B cell (primary cell): ENCODE measurements at regions of chr19 and their contacts with region 1.

Region 1: DNA sequence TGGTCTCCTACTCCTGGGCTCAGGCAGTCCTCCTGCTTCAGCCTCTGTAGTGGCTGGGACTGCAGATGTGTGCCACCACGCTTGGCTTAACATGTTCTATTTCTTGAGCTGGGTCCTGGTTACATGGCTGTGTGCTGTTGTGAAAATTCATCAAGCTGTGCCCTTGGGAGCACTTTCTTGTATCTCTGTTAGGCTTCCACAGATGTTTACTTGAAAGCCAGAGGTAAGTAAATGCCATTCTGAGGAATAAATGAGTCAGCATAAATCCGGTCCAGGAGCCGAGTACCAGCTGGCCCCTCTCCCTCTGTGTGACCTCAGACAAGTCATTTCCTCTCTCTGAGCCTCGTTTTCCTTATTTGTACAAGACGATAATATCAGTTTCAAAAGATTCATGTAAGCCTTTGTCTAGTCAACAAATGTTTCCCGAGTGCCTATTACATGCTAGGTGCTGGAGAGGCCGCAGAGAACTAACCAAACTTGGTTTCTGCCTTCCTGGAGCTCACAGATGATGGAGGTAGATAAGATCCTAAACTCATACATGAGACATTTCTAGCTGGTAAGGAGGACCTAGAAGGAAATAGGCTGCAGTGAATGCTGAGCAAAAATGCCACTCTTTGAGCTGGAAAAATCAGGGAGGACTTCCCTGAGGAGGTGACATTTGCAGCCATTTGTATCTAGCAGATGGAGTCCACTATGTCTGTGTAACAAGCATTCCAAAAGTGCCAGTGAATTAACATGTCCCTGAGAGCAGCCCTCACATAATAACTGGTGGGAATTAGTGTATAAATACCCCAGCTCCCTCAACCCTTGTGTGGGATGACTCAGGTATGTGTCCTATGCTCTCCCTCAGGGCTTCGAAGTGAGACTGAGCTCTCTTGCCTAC is 2.7 kb upstream of the RASAL3 start:
- DNase-seq: no peak
- ATAC-seq: no peak
- H3K4me3 ChIP-seq: no peak overlapping the region
- H3K4me3 Mint-ChIP-seq: peak overlapping the region; percentile 47
- H3K27ac ChIP-seq: no peak overlapping the region
- H3K27ac Mint-ChIP-seq: peak overlapping the region; percentile 68
- H3K4me1 ChIP-seq: peaks cover 41 to 53% of the 10 kb centered on the region in 2 donors
- H3K4me1 Mint-ChIP-seq: peaks cover 48% of the 10 kb centered on the region
- H3K27me3 ChIP-seq: peaks cover 0 to 24% (median 8%) of the 10 kb centered on the region in 4 experiments
- H3K27me3 Mint-ChIP-seq: peaks cover 19% of the 10 kb centered on the region
- CTCF ChIP-seq: no peak

Region 2: GRCh38 chr19:14318873-14319272 is 1148.2 kb before region 1 on chr19:
- CTCF ChIA-PET with region 1: no interaction called
- POLR2A ChIA-PET with region 1: no interaction called
- intact Hi-C with region 1: no loop called
- DNase-seq: no peak
- ATAC-seq: no peak
- H3K4me3 ChIP-seq: no peak overlapping the region
- H3K4me3 Mint-ChIP-seq: no peak overlapping the region
- H3K27ac ChIP-seq: no peak overlapping the region
- H3K27ac Mint-ChIP-seq: no peak overlapping the region
- H3K4me1 ChIP-seq: no peaks in the 10 kb centered on the region
- H3K4me1 Mint-ChIP-seq: no peaks in the 10 kb centered on the region
- H3K27me3 ChIP-seq: no peaks in the 10 kb centered on the region
- H3K27me3 Mint-ChIP-seq: no peaks in the 10 kb centered on the region
- CTCF ChIP-seq: no peak

Region 3: DNA sequence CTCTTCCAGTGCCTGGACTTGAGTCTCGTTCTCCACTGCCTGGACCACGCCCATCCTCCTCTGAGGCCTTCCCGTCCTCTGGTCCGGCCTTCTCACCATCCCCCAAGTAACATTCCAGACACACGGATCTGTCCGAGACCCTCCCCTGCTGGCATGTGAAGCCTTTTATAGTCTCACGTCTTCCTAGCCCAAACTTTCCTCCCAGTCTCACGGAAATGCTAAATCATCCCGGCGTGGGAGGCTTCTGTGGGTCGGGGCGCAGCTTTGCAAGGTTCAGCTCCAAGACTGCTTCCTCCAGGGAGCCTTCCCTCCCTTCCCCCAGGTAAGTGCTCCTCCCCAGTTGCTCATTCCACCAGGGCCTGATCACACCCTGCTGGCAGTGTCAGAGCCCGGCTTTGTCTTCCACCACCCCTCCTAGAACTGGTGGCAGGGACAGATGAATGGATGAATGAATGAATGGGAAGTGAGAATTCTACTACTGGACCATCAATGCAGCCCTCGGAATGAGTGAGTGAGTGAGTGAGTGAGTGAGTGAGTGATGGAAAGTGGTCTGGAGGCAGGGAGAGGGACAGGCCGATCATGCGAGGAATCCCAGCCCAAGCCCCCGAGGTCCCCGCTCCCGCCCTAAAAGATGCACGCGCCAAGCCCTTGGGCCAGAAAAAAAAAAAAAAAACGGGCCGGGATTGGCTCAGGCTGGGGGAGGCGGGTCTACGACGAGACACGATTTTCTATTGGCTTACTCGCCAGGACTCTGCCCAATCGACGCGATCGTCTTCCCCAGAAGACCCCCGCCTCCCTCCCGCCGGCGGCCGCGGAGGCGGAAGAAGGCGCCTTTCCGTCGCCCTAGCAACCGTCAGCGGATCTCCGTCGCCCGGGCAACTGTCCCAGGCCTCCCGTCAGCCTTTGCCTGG is 244.1 kb before region 1 on chr19:
- CTCF ChIA-PET with region 1: no interaction called
- POLR2A ChIA-PET with region 1: no interaction called
- intact Hi-C with region 1: no loop called
- DNase-seq: peak; percentile 89
- ATAC-seq: peak; percentile 99
- H3K4me3 ChIP-seq: peak overlapping the region; percentile 30 to 70 (median 57)
- H3K4me3 Mint-ChIP-seq: peak overlapping the region; percentile 91
- H3K27ac ChIP-seq: no peak overlapping the region
- H3K27ac Mint-ChIP-seq: peak overlapping the region; percentile 53
- H3K4me1 ChIP-seq: peaks cover 16 to 17% of the 10 kb centered on the region in 2 donors
- H3K4me1 Mint-ChIP-seq: peaks cover 18% of the 10 kb centered on the region
- H3K27me3 ChIP-seq: peaks cover 0 to 19% (median 5%) of the 10 kb centered on the region in 4 experiments
- H3K27me3 Mint-ChIP-seq: peaks cover 18% of the 10 kb centered on the region
- CTCF ChIP-seq: no peak

Region 4: DNA sequence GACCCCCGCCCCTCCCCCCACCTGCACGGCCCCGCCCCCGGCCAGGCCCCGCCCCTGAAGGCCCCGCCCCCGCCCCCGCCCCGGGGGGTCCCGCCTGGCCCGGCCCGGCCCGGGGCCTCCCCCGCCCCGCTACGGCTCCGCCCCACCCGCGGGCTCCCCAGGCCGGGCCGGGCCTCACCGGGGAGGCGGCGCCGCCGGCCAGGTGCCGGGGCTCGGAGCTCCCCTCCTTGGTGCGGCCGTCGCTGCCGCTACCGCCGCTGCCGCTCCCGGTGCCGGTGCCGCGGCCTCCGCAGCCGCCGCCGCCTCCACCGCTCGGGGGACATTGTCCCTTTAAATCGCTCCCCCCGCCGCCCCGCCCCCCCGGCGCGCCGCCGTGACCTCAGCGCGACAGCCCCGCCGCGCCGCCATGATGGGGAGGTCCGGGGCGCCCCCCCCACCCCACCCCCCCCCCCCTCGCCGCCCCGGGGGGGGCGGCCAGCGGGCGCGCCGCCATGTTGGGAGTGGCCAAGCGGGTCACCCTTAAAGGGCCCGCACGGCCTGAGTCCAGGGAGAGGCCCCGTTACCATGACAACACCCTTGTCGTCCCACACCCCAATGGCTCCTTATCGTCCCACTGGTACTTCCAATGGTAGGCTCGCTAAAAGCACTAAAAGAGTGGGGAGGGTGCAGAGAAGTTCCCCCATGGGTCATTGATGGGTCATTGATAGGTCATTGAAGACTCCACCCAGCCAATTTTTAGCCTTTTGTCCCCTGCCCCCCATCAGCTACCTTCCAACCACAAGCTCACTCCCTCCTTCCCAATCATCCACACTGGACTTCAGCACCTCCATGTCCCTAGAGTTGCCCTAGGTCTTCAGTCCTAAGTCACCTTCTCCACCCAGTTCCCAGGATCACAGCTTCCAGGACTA is 17.2 kb before region 1 on chr19 and contains the start of gene WIZ:
- CTCF ChIA-PET with region 1: interaction called, 7 read pairs
- POLR2A ChIA-PET with region 1: no interaction called
- intact Hi-C with region 1: loop called (anchors 2 kb)
- DNase-seq: peak; percentile 91
- ATAC-seq: peak; percentile 78
- H3K4me3 ChIP-seq: peak within 1 kb of the TSS in 4 of 5 experiments; percentile 51 to 69 (median 58)
- H3K4me3 Mint-ChIP-seq: peak within 1 kb of the TSS; percentile 85
- H3K27ac ChIP-seq: peak within 1 kb of the TSS; percentile 73 to 81
- H3K27ac Mint-ChIP-seq: peak within 1 kb of the TSS; percentile 92
- H3K4me1 ChIP-seq: peaks cover 8 to 17% of the 10 kb centered on the region in 2 donors
- H3K4me1 Mint-ChIP-seq: peaks cover 12% of the 10 kb centered on the region
- H3K27me3 ChIP-seq: no peaks in the 10 kb centered on the region
- H3K27me3 Mint-ChIP-seq: no peaks in the 10 kb centered on the region
- CTCF ChIP-seq: no peak
- total RNA-seq, gene WIZ: 24.8 and 28.9 TPM in 2 replicates